ENCODE measurements at regions of chr6 and their contacts with region 1.

Region 1: DNA sequence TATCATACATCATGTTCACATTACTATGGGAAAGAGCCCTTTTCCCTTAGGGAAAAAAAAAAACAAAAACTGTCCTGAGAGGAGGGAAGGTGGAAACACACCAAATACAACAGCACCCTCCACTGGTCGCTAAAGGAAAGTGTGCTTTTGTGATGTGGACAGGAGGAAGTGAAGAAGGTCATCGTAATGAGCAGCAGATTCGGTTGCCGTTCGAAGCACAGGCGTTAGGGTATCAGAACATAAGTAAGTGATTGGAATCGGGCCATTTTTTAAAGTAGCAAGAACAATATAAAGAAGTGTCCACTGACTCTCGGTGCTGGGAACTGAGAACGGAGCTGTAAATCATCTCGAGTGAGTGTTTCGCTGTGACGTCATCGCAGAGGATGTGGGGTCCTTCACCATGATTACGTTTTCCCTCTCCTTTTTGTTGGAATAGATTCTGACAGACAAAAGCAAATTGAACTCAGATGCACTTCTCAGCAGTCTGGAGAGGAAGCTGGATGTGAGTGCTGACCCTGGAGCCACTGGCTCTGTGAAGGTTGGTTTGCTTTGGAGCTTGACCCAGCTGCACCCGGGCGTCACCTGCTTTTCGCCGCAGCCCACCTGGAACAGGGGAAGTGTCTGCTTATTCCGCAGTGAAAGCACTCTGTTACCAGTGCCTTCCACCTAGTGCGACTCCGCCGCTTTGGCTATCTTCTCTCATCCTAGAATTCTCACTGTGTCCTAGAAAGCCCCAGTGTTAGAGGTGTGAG is 203.6 kb upstream of the GMDS start:
- DNase-seq: peak; percentile 85
- ATAC-seq: peak; percentile 68
- H3K4me3 ChIP-seq: peak overlapping the region; percentile 26; the same call in 1 of the 2 replicates
- H3K27ac ChIP-seq: no peak overlapping the region
- H3K4me1 ChIP-seq: peaks cover 20% of the 10 kb centered on the region
- H3K27me3 ChIP-seq: no peaks in the 10 kb centered on the region
- CTCF ChIP-seq: peak; percentile 89

Region 2: GRCh38 chr6:1952726-1953360 is 496.2 kb before region 1 on chr6:
- CTCF ChIA-PET with region 1: no interaction called
- POLR2A ChIA-PET with region 1: no interaction called
- intact Hi-C with region 1: loop called (anchors 5 kb)
- DNase-seq: peak; percentile 97
- ATAC-seq: peak; percentile 100
- H3K4me3 ChIP-seq: peak overlapping the region; percentile 47; the same call in 1 of the 2 replicates
- H3K27ac ChIP-seq: peak overlapping the region; percentile 80
- H3K4me1 ChIP-seq: peaks cover 16% of the 10 kb centered on the region
- H3K27me3 ChIP-seq: no peaks in the 10 kb centered on the region
- CTCF ChIP-seq: peak; percentile 32; the same call in 1 of the 2 replicates

Region 3: GRCh38 chr6:2179959-2180358 is 269.0 kb before region 1 on chr6:
- CTCF ChIA-PET with region 1: no interaction called
- POLR2A ChIA-PET with region 1: no interaction called
- intact Hi-C with region 1: no loop called
- DNase-seq: no peak
- ATAC-seq: no peak
- H3K4me3 ChIP-seq: no peak overlapping the region
- H3K27ac ChIP-seq: no peak overlapping the region
- H3K4me1 ChIP-seq: no peaks in the 10 kb centered on the region
- H3K27me3 ChIP-seq: no peaks in the 10 kb centered on the region
- CTCF ChIP-seq: no peak

Region 4: GRCh38 chr6:2209226-2209809 is 239.7 kb before region 1 on chr6:
- CTCF ChIA-PET with region 1: interaction called, 6 read pairs
- POLR2A ChIA-PET with region 1: no interaction called
- intact Hi-C with region 1: loop called (anchors 2 kb)
- DNase-seq: peak; percentile 88
- ATAC-seq: peak; percentile 97
- H3K4me3 ChIP-seq: no peak overlapping the region
- H3K27ac ChIP-seq: no peak overlapping the region
- H3K4me1 ChIP-seq: no peaks in the 10 kb centered on the region
- H3K27me3 ChIP-seq: no peaks in the 10 kb centered on the region
- CTCF ChIP-seq: peak; percentile 89

Region 5: DNA sequence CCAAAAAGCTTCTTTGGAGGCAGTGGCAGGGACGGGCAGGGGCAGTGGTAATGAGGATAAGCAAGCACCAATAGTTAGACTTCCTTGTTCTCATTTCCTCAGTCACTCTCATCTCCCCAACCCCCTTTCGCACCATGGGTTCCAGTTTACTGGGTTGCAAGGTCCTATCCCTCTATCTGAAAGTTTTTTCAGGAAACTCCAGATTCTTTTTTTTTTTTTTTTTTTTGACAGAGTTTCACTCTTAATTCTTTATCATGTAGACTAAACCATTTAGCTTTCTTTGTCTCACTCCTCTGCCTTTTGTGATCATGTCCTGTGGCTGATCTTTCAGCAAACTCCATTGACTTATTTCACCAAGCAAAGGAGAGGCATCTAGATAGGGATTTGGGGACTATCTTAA is 152.2 kb before region 1 on chr6:
- CTCF ChIA-PET with region 1: interaction called, 16 read pairs
- POLR2A ChIA-PET with region 1: no interaction called
- intact Hi-C with region 1: no loop called
- DNase-seq: no peak
- ATAC-seq: no peak
- H3K4me3 ChIP-seq: no peak overlapping the region
- H3K27ac ChIP-seq: no peak overlapping the region
- H3K4me1 ChIP-seq: no peaks in the 10 kb centered on the region
- H3K27me3 ChIP-seq: no peaks in the 10 kb centered on the region
- CTCF ChIP-seq: no peak

Region 6: DNA sequence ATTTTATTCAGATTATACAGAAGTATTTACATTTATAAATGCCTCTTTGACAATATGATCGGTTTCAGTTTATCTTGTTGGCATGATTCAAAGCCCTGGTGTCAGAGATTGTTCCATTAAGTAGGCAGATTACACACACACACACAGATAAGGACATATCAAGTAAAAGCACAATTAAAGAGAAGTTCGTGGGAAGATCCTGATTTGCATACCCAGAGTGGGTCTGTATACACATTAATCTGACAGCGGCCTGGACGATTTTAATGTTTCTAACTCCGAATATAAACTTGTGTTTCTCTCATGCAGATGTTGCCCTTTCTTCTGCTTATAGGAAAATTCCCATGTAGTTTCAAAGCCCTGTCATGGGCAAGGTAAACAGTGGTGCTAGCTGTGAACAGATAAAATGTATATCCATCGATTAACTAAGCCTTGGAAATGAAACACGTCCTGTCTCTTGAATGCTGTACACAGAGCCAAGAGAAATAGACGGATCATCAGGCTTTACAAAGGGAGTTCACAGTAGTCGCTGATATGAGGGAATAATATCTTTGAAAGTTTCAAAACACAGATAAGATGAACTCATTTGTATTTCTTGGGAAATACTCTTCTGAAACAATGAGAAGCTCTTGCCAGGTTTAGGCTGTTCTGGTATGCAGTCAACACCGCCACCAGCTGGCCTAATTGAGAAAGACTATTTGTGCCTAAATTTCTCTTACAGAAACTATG is 95.4 kb before region 1 on chr6:
- CTCF ChIA-PET with region 1: no interaction called
- POLR2A ChIA-PET with region 1: no interaction called
- intact Hi-C with region 1: loop called (anchors 1 kb)
- DNase-seq: peak; percentile 90
- ATAC-seq: peak; percentile 61
- H3K4me3 ChIP-seq: no peak overlapping the region
- H3K27ac ChIP-seq: no peak overlapping the region
- H3K4me1 ChIP-seq: no peaks in the 10 kb centered on the region
- H3K27me3 ChIP-seq: no peaks in the 10 kb centered on the region
- CTCF ChIP-seq: peak; percentile 94

Region 7: DNA sequence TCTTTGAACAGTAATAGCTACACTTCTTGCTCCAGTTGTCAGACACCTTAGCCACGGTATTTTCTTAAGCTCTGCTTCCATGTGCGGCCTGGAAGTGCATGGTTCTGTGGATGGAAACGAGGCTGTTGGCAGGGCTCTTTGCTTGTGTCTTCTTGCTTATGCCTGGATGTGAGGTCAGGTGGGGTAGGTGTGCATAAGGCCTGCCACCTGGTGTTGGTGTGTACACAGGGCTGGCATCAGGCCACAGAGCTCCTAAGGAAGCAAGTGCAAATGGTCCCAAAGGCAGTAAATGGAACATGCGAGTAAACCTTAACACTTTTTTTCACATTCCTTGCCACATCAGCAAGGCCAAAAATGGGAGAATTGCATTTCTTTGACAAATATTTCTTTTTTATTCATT is 45.5 kb before region 1 on chr6:
- CTCF ChIA-PET with region 1: no interaction called
- POLR2A ChIA-PET with region 1: no interaction called
- intact Hi-C with region 1: no loop called
- DNase-seq: no peak
- ATAC-seq: no peak
- H3K4me3 ChIP-seq: no peak overlapping the region
- H3K27ac ChIP-seq: no peak overlapping the region
- H3K4me1 ChIP-seq: no peaks in the 10 kb centered on the region
- H3K27me3 ChIP-seq: no peaks in the 10 kb centered on the region
- CTCF ChIP-seq: no peak